ENCODE measurements at regions of chr2 and their contacts with region 1.

Region 1: DNA sequence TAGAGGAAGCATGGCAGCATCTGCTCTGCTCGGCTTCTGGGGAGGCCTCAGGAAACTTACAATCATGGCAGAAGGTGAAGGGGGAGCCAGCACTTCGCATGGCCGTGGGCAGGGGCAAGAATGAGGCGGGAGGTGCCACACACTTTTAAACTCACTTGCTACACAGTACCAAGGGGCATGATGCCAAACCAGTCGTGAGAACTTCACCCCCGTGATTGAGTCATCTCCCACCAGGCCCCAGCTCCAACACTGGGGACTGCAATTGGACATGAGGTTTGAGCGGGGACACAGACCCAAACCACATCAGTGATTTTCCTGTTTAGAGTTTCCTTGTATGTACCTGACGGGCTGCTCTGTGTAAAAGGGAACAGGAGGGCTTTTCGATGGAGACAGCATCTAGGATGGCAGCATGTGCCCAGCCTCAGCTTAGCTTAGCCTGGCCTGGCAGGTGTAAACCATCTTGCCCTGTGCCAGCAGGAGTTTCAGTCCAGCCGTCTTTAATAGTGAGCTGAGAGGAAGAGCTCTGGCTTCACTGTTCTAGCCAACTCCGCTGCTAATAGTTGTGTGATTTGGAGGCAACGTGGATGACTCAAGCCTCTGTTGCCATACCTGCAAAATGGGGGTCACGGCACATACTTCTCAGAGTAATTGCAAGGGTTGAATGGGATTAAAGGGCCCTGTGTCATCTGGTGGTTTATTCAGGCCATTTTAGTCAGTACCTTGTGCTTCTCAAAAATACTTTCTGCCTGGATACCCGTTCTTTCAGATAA is 101.8 kb downstream of the ASAP2 start:
- DNase-seq: no peak
- ATAC-seq: no peak

Region 2: GRCh38 chr2:9205963-9206948 is 102.1 kb before region 1 on chr2 and contains the start of gene ASAP2:
- intact Hi-C with region 1: loop called (anchors 10 kb)
- DNase-seq: peak; percentile 87
- ATAC-seq: peak; percentile 85
- total RNA-seq, gene ASAP2: 47.1 TPM

Measured in sciatic nerve (tissue), 2 donors.